Aorta (tissue), 5 donors: ENCODE measurements at regions of chr21 and their contacts with region 1.

Region 1: GRCh38 chr21:15894596-15894995 is 164.8 kb downstream of the USP25 start:
- DNase-seq: no peak
- ATAC-seq: no peak
- H3K4me3 ChIP-seq: no peak overlapping the region
- H3K27ac ChIP-seq: no peak overlapping the region
- H3K4me1 ChIP-seq: no peaks in the 10 kb centered on the region
- H3K27me3 ChIP-seq: no peaks in the 10 kb centered on the region

Region 2: GRCh38 chr21:16323596-16323995 is 429.0 kb after region 1 on chr21:
- intact Hi-C with region 1: loop called in 1 of 2 experiments (anchors 5 kb)
- DNase-seq: no peak
- ATAC-seq: no peak
- H3K4me3 ChIP-seq: no peak overlapping the region
- H3K27ac ChIP-seq: no peak overlapping the region
- H3K4me1 ChIP-seq: peaks cover 0 to 1% of the 10 kb centered on the region in 2 donors
- H3K27me3 ChIP-seq: no peaks in the 10 kb centered on the region

Region 3: GRCh38 chr21:16330082-16330907 is 435.7 kb after region 1 on chr21:
- intact Hi-C with region 1: loop called (anchors 5 to 10 kb)
- DNase-seq: no peak
- ATAC-seq: peak; percentile 90
- H3K4me3 ChIP-seq: no peak overlapping the region
- H3K27ac ChIP-seq: no peak overlapping the region
- H3K4me1 ChIP-seq: no peaks in the 10 kb centered on the region
- H3K27me3 ChIP-seq: no peaks in the 10 kb centered on the region